Posterior vena cava (tissue), 2 donors: ENCODE measurements at regions of chr19 and their contacts with region 1.

Region 1: DNA sequence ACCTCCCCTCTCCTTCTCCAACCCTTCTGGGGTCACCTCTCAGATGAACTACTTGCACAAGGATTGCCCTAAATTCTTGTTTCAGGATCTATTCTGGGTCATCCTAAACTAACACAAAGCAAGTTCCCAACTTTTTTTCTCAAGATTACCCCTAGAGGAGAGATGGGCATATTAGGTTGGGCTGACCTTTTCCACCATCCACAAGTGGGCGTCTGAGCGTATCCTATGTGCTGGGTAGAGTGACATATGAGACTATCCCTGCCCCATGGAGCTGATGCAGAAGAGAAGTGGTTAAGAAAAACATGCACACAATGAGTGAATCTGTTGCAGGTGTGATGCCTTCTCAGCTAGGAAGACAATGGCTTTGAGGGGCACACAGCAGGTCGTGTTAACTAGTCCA is 132.7 kb downstream of the CACNA1A start:
- DNase-seq: no peak

Region 2: GRCh38 chr19:15280915-15281683 is 1907.5 kb after region 1 on chr19:
- intact Hi-C with region 1: loop called in 1 of 2 experiments (anchors 5 kb)
- DNase-seq: peak; percentile 94